ENCODE measurements at regions of chr1 and their contacts with region 1.

Region 1: GRCh38 chr1:175319418-175320230 is 127.0 kb upstream of the KIAA0040 start:
- DNase-seq: peak; percentile 45 to 83 (median 71)
- ATAC-seq: peak; percentile 86
- H3K4me3 ChIP-seq: no peak overlapping the region
- H3K4me3 Mint-ChIP-seq: no peak overlapping the region
- H3K27ac ChIP-seq: no peak overlapping the region
- H3K27ac Mint-ChIP-seq: no peak overlapping the region
- H3K4me1 ChIP-seq: peaks cover 6% of the 10 kb centered on the region
- H3K4me1 Mint-ChIP-seq: peaks cover 11% of the 10 kb centered on the region
- H3K27me3 ChIP-seq: no peaks in the 10 kb centered on the region
- H3K27me3 Mint-ChIP-seq: peaks cover 3% of the 10 kb centered on the region
- CTCF ChIP-seq: peak; percentile 86

Region 2: GRCh38 chr1:174769961-174770549 is 549.6 kb before region 1 on chr1:
- CTCF ChIA-PET with region 1: no interaction called
- POLR2A ChIA-PET with region 1: no interaction called
- intact Hi-C with region 1: loop called in 1 of 2 experiments (anchors 10 kb)
- DNase-seq: peak in 2 of 9 experiments; percentile 64 to 75
- ATAC-seq: peak; percentile 65
- H3K4me3 ChIP-seq: no peak overlapping the region
- H3K4me3 Mint-ChIP-seq: no peak overlapping the region
- H3K27ac ChIP-seq: no peak overlapping the region
- H3K27ac Mint-ChIP-seq: no peak overlapping the region
- H3K4me1 ChIP-seq: no peaks in the 10 kb centered on the region
- H3K4me1 Mint-ChIP-seq: peaks cover 3% of the 10 kb centered on the region
- H3K27me3 ChIP-seq: no peaks in the 10 kb centered on the region
- H3K27me3 Mint-ChIP-seq: no peaks in the 10 kb centered on the region
- CTCF ChIP-seq: peak; percentile 78

Region 3: DNA sequence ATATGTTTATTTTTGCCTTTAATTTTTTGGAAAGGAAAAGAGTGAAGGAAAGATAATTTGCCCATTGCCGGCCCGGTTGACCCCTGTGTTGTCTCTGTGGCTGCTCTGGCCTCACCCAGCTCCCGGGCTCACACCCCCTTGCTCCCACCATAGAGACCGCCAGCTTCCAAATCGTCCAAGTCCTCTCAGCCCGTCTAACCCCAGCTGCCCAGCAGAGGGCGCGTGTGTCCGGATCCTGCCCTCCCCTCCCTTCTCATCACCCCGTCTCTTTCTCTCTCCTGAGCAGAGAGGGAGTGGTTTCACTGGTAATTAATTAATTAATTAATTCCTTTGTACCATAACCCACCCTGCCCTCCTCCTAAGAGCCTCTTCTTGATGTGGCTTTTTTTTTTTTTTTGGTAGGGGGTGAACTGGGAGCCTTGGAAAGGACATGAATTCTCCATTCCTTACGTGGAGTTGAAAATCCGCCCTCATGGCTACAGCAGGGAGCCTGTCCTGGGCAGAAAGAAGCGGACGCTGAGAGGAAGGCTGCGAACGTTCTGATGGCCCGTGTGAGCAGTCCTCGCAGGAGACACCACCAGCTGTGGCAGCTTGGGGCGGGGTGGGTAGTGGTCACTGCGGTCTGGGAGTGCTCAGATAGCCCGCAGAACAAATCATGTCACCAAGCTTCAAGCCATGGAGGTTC is 173.0 kb before region 1 on chr1:
- CTCF ChIA-PET with region 1: interaction called, 432 read pairs
- POLR2A ChIA-PET with region 1: interaction called, 10 read pairs
- intact Hi-C with region 1: no loop called
- DNase-seq: peak; percentile 48 to 75 (median 67)
- ATAC-seq: peak; percentile 87
- H3K4me3 ChIP-seq: no peak overlapping the region
- H3K4me3 Mint-ChIP-seq: no peak overlapping the region
- H3K27ac ChIP-seq: no peak overlapping the region
- H3K27ac Mint-ChIP-seq: no peak overlapping the region
- H3K4me1 ChIP-seq: peaks cover 2% of the 10 kb centered on the region
- H3K4me1 Mint-ChIP-seq: peaks cover 3% of the 10 kb centered on the region
- H3K27me3 ChIP-seq: peaks cover 0 to under 1% of the 10 kb centered on the region in 2 experiments
- H3K27me3 Mint-ChIP-seq: peaks cover 28% of the 10 kb centered on the region
- CTCF ChIP-seq: peak; percentile 88

Region 4: GRCh38 chr1:175179845-175180590 is 139.6 kb before region 1 on chr1:
- CTCF ChIA-PET with region 1: interaction called, 11 read pairs
- POLR2A ChIA-PET with region 1: no interaction called
- intact Hi-C with region 1: no loop called
- DNase-seq: no peak
- ATAC-seq: no peak
- H3K4me3 ChIP-seq: no peak overlapping the region
- H3K4me3 Mint-ChIP-seq: no peak overlapping the region
- H3K27ac ChIP-seq: no peak overlapping the region
- H3K27ac Mint-ChIP-seq: peak overlapping the region; percentile 47
- H3K4me1 ChIP-seq: peaks cover 34% of the 10 kb centered on the region
- H3K4me1 Mint-ChIP-seq: peaks cover 85% of the 10 kb centered on the region
- H3K27me3 ChIP-seq: no peaks in the 10 kb centered on the region
- H3K27me3 Mint-ChIP-seq: no peaks in the 10 kb centered on the region
- CTCF ChIP-seq: no peak

Region 5: GRCh38 chr1:175297291-175297690 is 22.3 kb before region 1 on chr1:
- CTCF ChIA-PET with region 1: interaction called, 10 read pairs
- POLR2A ChIA-PET with region 1: no interaction called
- intact Hi-C with region 1: no loop called
- DNase-seq: peak in 2 of 9 experiments; percentile 17 to 52
- ATAC-seq: peak; percentile 72
- H3K4me3 ChIP-seq: no peak overlapping the region
- H3K4me3 Mint-ChIP-seq: no peak overlapping the region
- H3K27ac ChIP-seq: no peak overlapping the region
- H3K27ac Mint-ChIP-seq: no peak overlapping the region
- H3K4me1 ChIP-seq: peaks cover 28% of the 10 kb centered on the region
- H3K4me1 Mint-ChIP-seq: peaks cover 36% of the 10 kb centered on the region
- H3K27me3 ChIP-seq: no peaks in the 10 kb centered on the region
- H3K27me3 Mint-ChIP-seq: peaks cover 14% of the 10 kb centered on the region
- CTCF ChIP-seq: no peak

Region 6: GRCh38 chr1:175338387-175339135 is 18.9 kb after region 1 on chr1:
- CTCF ChIA-PET with region 1: interaction called, 18 read pairs
- POLR2A ChIA-PET with region 1: no interaction called
- intact Hi-C with region 1: no loop called
- DNase-seq: peak; percentile 31 to 71 (median 57)
- ATAC-seq: peak; percentile 98
- H3K4me3 ChIP-seq: no peak overlapping the region
- H3K4me3 Mint-ChIP-seq: no peak overlapping the region
- H3K27ac ChIP-seq: no peak overlapping the region
- H3K27ac Mint-ChIP-seq: no peak overlapping the region
- H3K4me1 ChIP-seq: no peaks in the 10 kb centered on the region
- H3K4me1 Mint-ChIP-seq: peaks cover 5% of the 10 kb centered on the region
- H3K27me3 ChIP-seq: no peaks in the 10 kb centered on the region
- H3K27me3 Mint-ChIP-seq: peaks cover 21% of the 10 kb centered on the region
- CTCF ChIP-seq: peak; percentile 58

Measured in CD8-positive, alpha-beta T cell (primary cell).